H1 (cell line): ENCODE measurements at regions of chr11 and their contacts with region 1.

Region 1: GRCh38 chr11:2036863-2037486 is 39.3 kb upstream of the H19 start:
- DNase-seq: no peak
- H3K4me3 ChIP-seq: no peak overlapping the region
- H3K27ac ChIP-seq: no peak overlapping the region
- H3K4me1 ChIP-seq: no peaks in the 10 kb centered on the region
- H3K27me3 ChIP-seq: no peaks in the 10 kb centered on the region
- CTCF ChIP-seq: no peak
- EP300 ChIP-seq: no peak
- POLR2A ChIP-seq: no peak
- RAD21 ChIP-seq: no peak

Region 2: GRCh38 chr11:1870721-1871466 is 166.1 kb before region 1 on chr11:
- CTCF ChIA-PET with region 1: interaction called, 10 read pairs
- POLR2A ChIA-PET with region 1: no interaction called
- DNase-seq: no peak
- H3K4me3 ChIP-seq: no peak overlapping the region
- H3K27ac ChIP-seq: no peak overlapping the region
- H3K4me1 ChIP-seq: no peaks in the 10 kb centered on the region
- H3K27me3 ChIP-seq: peaks cover 0 to 3% (median 0%) of the 10 kb centered on the region in 4 experiments; a peak in 1 of 7 replicates
- CTCF ChIP-seq: no peak
- EP300 ChIP-seq: no peak
- POLR2A ChIP-seq: no peak
- RAD21 ChIP-seq: no peak

Region 3: GRCh38 chr11:1899090-1899489 is 137.9 kb before region 1 on chr11:
- CTCF ChIA-PET with region 1: no interaction called
- POLR2A ChIA-PET with region 1: no interaction called
- DNase-seq: no peak
- H3K4me3 ChIP-seq: no peak overlapping the region
- H3K27ac ChIP-seq: no peak overlapping the region
- H3K4me1 ChIP-seq: no peaks in the 10 kb centered on the region
- H3K27me3 ChIP-seq: no peaks in the 10 kb centered on the region; a peak in 1 of 7 replicates
- CTCF ChIP-seq: no peak
- EP300 ChIP-seq: no peak
- POLR2A ChIP-seq: no peak
- RAD21 ChIP-seq: no peak

Region 4: GRCh38 chr11:1953489-1954266 is 83.3 kb before region 1 on chr11:
- CTCF ChIA-PET with region 1: interaction called, 19 read pairs
- POLR2A ChIA-PET with region 1: no interaction called
- DNase-seq: no peak
- H3K4me3 ChIP-seq: no peak overlapping the region
- H3K27ac ChIP-seq: no peak overlapping the region
- H3K4me1 ChIP-seq: no peaks in the 10 kb centered on the region
- H3K27me3 ChIP-seq: no peaks in the 10 kb centered on the region
- CTCF ChIP-seq: no peak
- EP300 ChIP-seq: no peak
- POLR2A ChIP-seq: no peak
- RAD21 ChIP-seq: no peak

Region 5: GRCh38 chr11:2074266-2074825 is 37.4 kb after region 1 on chr11:
- CTCF ChIA-PET with region 1: interaction called, 14 read pairs
- POLR2A ChIA-PET with region 1: no interaction called
- DNase-seq: peak in 1 of 2 experiments; percentile 75
- H3K4me3 ChIP-seq: no peak overlapping the region
- H3K27ac ChIP-seq: no peak overlapping the region
- H3K4me1 ChIP-seq: no peaks in the 10 kb centered on the region
- H3K27me3 ChIP-seq: peaks cover 0 to 7% (median 4%) of the 10 kb centered on the region in 4 experiments; a peak in 3 of 7 replicates
- CTCF ChIP-seq: peak; percentile 63 to 85 (median 71)
- EP300 ChIP-seq: no peak
- POLR2A ChIP-seq: no peak
- RAD21 ChIP-seq: peak; percentile 38 to 54

Region 6: GRCh38 chr11:2137202-2138071 is 100.5 kb after region 1 on chr11:
- CTCF ChIA-PET with region 1: interaction called, 53 read pairs
- POLR2A ChIA-PET with region 1: no interaction called
- DNase-seq: peak in 1 of 2 experiments; percentile 82
- H3K4me3 ChIP-seq: peak overlapping the region; percentile 26 to 65 (median 30)
- H3K27ac ChIP-seq: no peak overlapping the region
- H3K4me1 ChIP-seq: peaks cover 0 to 12% (median 7%) of the 10 kb centered on the region in 4 experiments; a peak in 6 of 7 replicates
- H3K27me3 ChIP-seq: peaks cover 52 to 86% (median 76%) of the 10 kb centered on the region in 4 experiments
- CTCF ChIP-seq: no peak
- EP300 ChIP-seq: no peak
- POLR2A ChIP-seq: no peak
- RAD21 ChIP-seq: no peak

Region 7: DNA sequence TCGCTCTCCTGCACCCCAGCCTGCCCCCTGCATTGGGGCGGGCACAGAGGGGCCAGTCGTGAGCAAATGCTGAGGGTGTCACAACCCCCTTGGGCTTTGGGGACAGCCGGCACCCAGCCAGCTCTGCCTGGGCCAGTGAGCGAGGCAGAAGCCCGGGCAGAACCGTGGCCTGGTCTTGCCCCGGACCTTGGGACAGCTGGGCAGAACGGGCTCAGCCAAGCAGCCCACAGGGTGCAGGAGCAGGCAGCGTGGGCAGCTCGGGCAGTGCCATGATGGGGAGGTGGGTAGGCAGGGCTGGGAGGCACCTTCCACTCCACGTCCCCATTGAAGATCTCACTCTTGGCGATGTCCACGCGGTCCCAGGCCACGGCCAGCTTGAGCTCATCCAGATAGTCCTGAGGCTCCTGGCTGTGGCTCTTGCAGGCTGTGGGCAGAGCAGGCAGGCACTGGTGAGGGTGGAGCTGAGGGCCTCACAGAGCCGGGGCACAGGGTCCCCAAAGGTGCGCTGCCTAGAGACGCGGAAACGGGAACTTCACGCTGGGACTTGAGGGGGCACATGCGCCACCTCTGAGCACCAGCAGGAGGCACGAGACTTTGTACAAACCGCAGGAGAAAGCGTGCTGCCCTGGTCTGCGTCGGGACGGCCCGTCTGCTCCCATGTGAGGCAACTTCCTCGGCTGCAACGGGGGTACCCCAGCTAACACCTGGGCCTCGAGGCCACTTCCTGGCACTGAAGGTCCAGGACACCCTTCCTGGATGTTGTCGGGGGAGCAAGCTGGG is 378.8 kb after region 1 on chr11:
- CTCF ChIA-PET with region 1: no interaction called
- POLR2A ChIA-PET with region 1: no interaction called
- DNase-seq: no peak
- H3K4me3 ChIP-seq: no peak overlapping the region
- H3K27ac ChIP-seq: no peak overlapping the region
- H3K4me1 ChIP-seq: peaks cover 0 to 5% (median under 1%) of the 10 kb centered on the region in 4 experiments; a peak in 2 of 7 replicates
- H3K27me3 ChIP-seq: no peaks in the 10 kb centered on the region; a peak in 2 of 7 replicates
- CTCF ChIP-seq: peak; percentile 21 to 39 (median 22); a peak in 3 of 4 replicates
- EP300 ChIP-seq: no peak
- POLR2A ChIP-seq: no peak
- RAD21 ChIP-seq: no peak